ENCODE measurements at regions of chr5 and their contacts with region 1.

Region 1: GRCh38 chr5:137660349-137660817 is 75.5 kb downstream of the KLHL3 start:
- DNase-seq: peak; percentile 67
- CTCF ChIP-seq: peak; percentile 77

Region 2: DNA sequence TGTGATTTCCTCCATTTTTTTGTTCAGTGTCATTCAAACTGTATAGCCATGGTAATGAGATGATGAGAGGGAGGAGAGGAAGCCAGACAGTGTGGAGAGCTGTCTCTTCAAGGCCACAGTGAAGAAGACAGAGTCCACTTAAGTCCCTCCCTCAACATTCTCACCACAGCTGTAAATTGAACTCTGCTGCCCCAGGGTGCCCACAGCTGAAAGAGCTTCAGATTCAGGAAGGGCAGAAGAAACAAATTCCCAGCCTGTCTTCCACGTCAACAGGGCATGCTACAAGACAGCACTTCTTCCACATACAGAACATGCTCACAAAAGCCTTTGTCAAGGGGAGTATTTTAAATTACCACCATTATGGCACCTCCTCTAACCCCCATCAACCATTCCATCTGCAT is 24.9 kb before region 1 on chr5:
- CTCF ChIA-PET with region 1: interaction called, 31 read pairs
- POLR2A ChIA-PET with region 1: no interaction called
- DNase-seq: no peak
- CTCF ChIP-seq: no peak

Region 3: GRCh38 chr5:137649228-137649935 is 11.0 kb before region 1 on chr5:
- CTCF ChIA-PET with region 1: interaction called, 23 read pairs
- POLR2A ChIA-PET with region 1: no interaction called
- DNase-seq: no peak
- CTCF ChIP-seq: no peak

Region 4: DNA sequence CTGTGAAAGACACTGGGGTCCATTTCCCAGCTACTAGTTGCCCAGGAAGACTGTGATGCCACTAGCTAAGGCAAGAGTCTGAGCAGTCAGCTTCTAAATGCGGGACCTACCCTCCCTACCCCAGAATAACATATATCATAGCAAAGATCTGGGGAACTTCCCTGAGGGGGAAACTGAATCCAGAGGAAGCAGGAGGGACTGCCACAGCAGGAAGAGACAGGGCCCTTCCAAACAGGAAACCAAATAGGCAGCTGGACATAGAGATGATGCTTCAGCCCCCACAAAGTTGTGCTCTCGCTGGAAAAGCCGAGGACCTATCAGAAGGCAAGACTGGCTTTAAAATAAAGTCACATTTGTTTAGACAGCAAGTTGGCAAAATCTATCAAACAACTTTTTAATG is 24.4 kb after region 1 on chr5:
- CTCF ChIA-PET with region 1: interaction called, 25 read pairs
- POLR2A ChIA-PET with region 1: no interaction called
- DNase-seq: no peak
- CTCF ChIP-seq: no peak

Region 5: GRCh38 chr5:137718611-137719010 is 58.2 kb after region 1 on chr5:
- CTCF ChIA-PET with region 1: interaction called, 13 read pairs
- POLR2A ChIA-PET with region 1: no interaction called
- DNase-seq: no peak
- CTCF ChIP-seq: no peak

Region 6: GRCh38 chr5:137743031-137743640 is 82.8 kb after region 1 on chr5:
- CTCF ChIA-PET with region 1: interaction called, 292 read pairs
- POLR2A ChIA-PET with region 1: interaction called, 7 read pairs
- DNase-seq: peak; percentile 53
- CTCF ChIP-seq: peak; percentile 65

Region 7: GRCh38 chr5:137822158-137822764 is 161.9 kb after region 1 on chr5:
- CTCF ChIA-PET with region 1: interaction called, 11 read pairs
- POLR2A ChIA-PET with region 1: no interaction called
- DNase-seq: peak; percentile 54
- CTCF ChIP-seq: peak; percentile 27